WTC11 (cell line): ENCODE measurements at regions of chr7 and their contacts with region 1.

Region 1: GRCh38 chr7:35593896-35594295 is 101.0 kb downstream of the HERPUD2 start:
- DNase-seq: peak; percentile 78
- ATAC-seq: peak; percentile 90
- H3K4me3 Mint-ChIP-seq: no peak overlapping the region
- H3K27ac Mint-ChIP-seq: no peak overlapping the region
- H3K4me1 Mint-ChIP-seq: peaks cover 7% of the 10 kb centered on the region
- H3K27me3 Mint-ChIP-seq: no peaks in the 10 kb centered on the region
- CTCF ChIP-seq: peak; percentile 72

Region 2: GRCh38 chr7:35316549-35316948 is 277.3 kb before region 1 on chr7:
- CTCF ChIA-PET with region 1: no interaction called
- POLR2A ChIA-PET with region 1: no interaction called
- DNase-seq: no peak
- ATAC-seq: no peak
- H3K4me3 Mint-ChIP-seq: no peak overlapping the region
- H3K27ac Mint-ChIP-seq: no peak overlapping the region
- H3K4me1 Mint-ChIP-seq: no peaks in the 10 kb centered on the region
- H3K27me3 Mint-ChIP-seq: no peaks in the 10 kb centered on the region; the same call in 1 of the 2 replicates
- CTCF ChIP-seq: no peak

Region 3: DNA sequence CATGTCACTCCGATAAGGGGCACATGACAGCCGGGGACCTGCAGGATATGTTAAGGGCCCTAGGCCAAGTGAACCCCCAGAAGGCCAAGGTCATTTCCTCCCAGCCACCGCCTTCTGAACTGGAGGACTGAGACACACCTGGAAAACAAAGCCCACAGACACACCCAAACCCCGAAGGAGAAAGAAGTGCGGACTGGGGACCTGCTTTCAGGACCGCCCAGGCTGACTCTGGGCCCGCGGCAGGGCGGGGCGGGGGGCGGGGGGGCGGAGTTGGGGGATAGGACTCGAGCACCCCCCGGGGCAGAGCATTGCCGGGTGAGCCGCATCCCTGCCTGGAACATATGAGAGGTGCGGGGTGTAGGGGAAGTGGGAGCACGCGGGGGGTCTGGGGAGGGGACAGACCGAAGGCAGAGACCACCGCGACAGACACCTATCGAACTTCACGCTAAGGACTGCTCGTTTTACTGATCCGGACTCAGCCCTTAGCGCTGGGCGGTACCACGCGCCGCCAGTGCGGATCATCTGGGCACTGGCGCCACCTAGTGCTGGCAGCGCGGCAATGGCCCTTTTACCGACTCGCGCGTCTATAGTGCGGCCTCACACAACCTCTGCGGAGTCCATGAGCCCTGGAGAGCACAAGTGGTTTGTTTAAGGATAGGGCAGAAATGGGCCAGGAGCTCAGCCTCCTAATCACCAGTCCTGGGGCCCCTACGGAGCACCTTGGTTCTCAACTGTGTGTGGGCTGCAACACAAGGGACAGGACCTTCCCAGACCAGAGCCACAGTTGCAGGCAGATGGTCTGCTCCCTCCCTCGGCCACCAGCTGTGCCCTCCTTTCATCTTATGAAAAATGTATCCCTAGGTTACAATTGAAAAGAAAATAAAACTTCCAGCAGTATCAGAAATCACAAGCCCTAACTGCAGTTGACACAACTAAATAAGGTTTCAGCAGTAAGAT is 56.6 kb before region 1 on chr7:
- CTCF ChIA-PET with region 1: interaction called, 12 read pairs
- POLR2A ChIA-PET with region 1: no interaction called
- DNase-seq: peak; percentile 84
- ATAC-seq: peak; percentile 96
- H3K4me3 Mint-ChIP-seq: peak overlapping the region; percentile 66
- H3K27ac Mint-ChIP-seq: no peak overlapping the region
- H3K4me1 Mint-ChIP-seq: 0 out of 2 replicates have a peak, but pooled peaks cover 3% of the 10 kb centered on the region
- H3K27me3 Mint-ChIP-seq: peaks cover 25% of the 10 kb centered on the region
- CTCF ChIP-seq: peak; percentile 88

Region 4: GRCh38 chr7:35605760-35606159 is 11.9 kb after region 1 on chr7:
- CTCF ChIA-PET with region 1: interaction called, 11 read pairs
- POLR2A ChIA-PET with region 1: no interaction called
- DNase-seq: no peak
- ATAC-seq: no peak
- H3K4me3 Mint-ChIP-seq: no peak overlapping the region
- H3K27ac Mint-ChIP-seq: no peak overlapping the region
- H3K4me1 Mint-ChIP-seq: no peaks in the 10 kb centered on the region
- H3K27me3 Mint-ChIP-seq: no peaks in the 10 kb centered on the region
- CTCF ChIP-seq: no peak

Region 5: GRCh38 chr7:35624299-35625186 is 30.6 kb after region 1 on chr7:
- CTCF ChIA-PET with region 1: interaction called, 33 read pairs
- POLR2A ChIA-PET with region 1: no interaction called
- DNase-seq: peak; percentile 52
- ATAC-seq: peak; percentile 97
- H3K4me3 Mint-ChIP-seq: no peak overlapping the region
- H3K27ac Mint-ChIP-seq: no peak overlapping the region
- H3K4me1 Mint-ChIP-seq: peaks cover 17% of the 10 kb centered on the region
- H3K27me3 Mint-ChIP-seq: no peaks in the 10 kb centered on the region
- CTCF ChIP-seq: peak; percentile 69